Activated T-helper 2 cell treated with anti-CD3 and anti-CD28 coated beads, Interferon-gamma antibody, Interleukin-2, Interleukin-4, amounts not matched to agents 10 μg/mL and 5 μg/mL and 100 μg/mL, durations not matched to agents 14 hours and 24 hours and 36 hours (primary cell): ENCODE measurements at regions of chr3 and their contacts with region 1.

Region 1: DNA sequence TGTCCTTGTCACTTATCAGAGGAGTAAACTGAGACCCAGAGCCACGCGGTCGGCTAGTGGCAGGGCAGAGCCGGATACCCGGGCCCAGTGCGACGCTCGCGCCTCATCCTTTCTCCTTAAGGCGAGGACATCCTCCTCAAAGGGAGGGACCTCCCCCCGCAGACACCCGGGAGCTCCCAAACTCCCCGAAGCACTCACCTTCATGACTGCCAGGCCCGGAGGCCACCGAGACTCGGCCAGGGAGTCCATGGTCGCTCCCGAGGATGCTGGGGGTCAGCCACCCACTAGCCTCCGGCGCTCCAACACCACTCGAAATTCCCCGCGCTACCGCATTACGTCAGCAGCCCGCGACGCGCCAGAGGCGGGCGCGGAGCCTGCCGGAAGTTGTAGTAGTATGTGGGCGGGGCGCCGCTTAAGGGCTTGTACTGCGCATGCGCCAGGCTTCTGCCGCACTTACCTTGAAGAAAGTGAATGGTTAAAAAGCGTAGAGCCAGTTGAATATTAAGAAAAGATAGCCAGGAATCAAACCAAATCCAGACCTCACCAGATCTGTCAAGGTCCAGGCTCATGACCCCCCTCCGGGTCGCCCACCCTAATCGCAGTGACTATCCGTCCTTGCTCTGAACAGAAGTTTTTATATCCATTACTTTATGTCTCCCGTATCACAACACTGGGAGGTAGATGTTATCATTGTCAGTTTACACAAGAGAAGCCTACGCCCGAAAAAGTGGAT is at the start of gene RAD18:
- DNase-seq: peak; percentile 92
- H3K4me3 Mint-ChIP-seq: peak within 1 kb of the TSS; percentile 82
- H3K27ac Mint-ChIP-seq: peak within 1 kb of the TSS; percentile 98
- H3K4me1 Mint-ChIP-seq: peaks cover 37% of the 10 kb centered on the region
- H3K27me3 Mint-ChIP-seq: peaks cover 2% of the 10 kb centered on the region
- total RNA-seq, gene RAD18: 46.1 and 46.5 TPM in 2 replicates

Region 2: GRCh38 chr3:8638994-8639658 is 324.2 kb before region 1 on chr3:
- intact Hi-C with region 1: no loop called
- DNase-seq: no peak
- H3K4me3 Mint-ChIP-seq: no peak overlapping the region
- H3K27ac Mint-ChIP-seq: no peak overlapping the region
- H3K4me1 Mint-ChIP-seq: no peaks in the 10 kb centered on the region
- H3K27me3 Mint-ChIP-seq: peaks cover 13% of the 10 kb centered on the region

Region 3: DNA sequence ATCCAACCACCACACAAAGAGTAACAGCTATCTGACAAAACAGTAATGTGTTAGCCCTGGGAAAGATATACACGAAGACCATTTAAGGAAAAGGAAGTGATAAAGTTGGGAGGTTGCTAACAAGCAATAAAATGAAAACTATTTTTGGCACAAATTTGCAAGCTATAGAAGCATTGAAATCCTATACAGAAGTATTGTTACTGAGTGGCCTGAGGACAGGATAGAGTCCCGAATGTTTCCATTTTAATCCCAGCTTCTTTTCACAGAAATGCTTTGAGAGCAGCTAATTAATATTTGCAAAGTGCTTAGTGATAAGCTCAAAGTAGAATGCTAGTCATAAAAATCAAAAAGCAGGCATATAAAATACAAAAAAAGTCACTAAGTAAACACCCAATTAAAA is 51.5 kb before region 1 on chr3:
- intact Hi-C with region 1: no loop called
- DNase-seq: no peak
- H3K4me3 Mint-ChIP-seq: no peak overlapping the region
- H3K27ac Mint-ChIP-seq: no peak overlapping the region
- H3K4me1 Mint-ChIP-seq: no peaks in the 10 kb centered on the region
- H3K27me3 Mint-ChIP-seq: no peaks in the 10 kb centered on the region

Region 4: GRCh38 chr3:8982509-8982908 is 19.2 kb after region 1 on chr3:
- intact Hi-C with region 1: no loop called
- DNase-seq: no peak
- H3K4me3 Mint-ChIP-seq: no peak overlapping the region
- H3K27ac Mint-ChIP-seq: no peak overlapping the region
- H3K4me1 Mint-ChIP-seq: no peaks in the 10 kb centered on the region
- H3K27me3 Mint-ChIP-seq: peaks cover 12% of the 10 kb centered on the region

Region 5: DNA sequence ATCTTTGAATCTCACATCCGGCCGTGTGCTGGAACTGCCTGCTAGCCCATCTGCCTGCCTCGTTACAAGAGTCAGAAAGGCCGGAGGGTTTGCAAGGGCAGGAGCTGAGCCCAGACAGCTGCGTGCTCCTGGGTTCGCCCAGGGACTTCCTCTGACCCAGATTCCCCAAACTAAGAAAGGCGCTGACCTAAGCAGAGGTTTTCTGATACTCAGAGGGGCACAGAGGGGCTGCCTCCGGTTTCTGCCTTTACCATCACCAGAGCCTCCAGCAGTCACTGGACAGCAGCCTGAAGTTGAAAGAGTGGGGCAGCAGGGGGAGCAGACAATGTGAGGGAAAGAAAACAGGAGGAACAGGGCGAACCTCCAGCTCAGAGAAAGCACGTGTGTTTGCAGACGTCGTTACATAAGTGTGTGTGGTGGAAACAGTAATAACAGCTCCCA is 33.4 kb after region 1 on chr3:
- intact Hi-C with region 1: no loop called
- DNase-seq: no peak
- H3K4me3 Mint-ChIP-seq: no peak overlapping the region
- H3K27ac Mint-ChIP-seq: no peak overlapping the region
- H3K4me1 Mint-ChIP-seq: no peaks in the 10 kb centered on the region
- H3K27me3 Mint-ChIP-seq: peaks cover under 1% of the 10 kb centered on the region

Region 6: GRCh38 chr3:9362731-9363530 is 399.6 kb after region 1 on chr3 and contains the start of gene THUMPD3:
- intact Hi-C with region 1: loop called (anchors 2 kb)
- DNase-seq: peak; percentile 89
- H3K4me3 Mint-ChIP-seq: peak within 1 kb of the TSS; percentile 98
- H3K27ac Mint-ChIP-seq: peak within 1 kb of the TSS; percentile 99
- H3K4me1 Mint-ChIP-seq: peaks cover 19% of the 10 kb centered on the region
- H3K27me3 Mint-ChIP-seq: no peaks in the 10 kb centered on the region
- total RNA-seq, gene THUMPD3: 56.5 and 57.7 TPM in 2 replicates

Region 7: GRCh38 chr3:10322352-10322710 is 1359.0 kb after region 1 on chr3:
- intact Hi-C with region 1: loop called (anchors 5 kb)
- DNase-seq: no peak
- H3K4me3 Mint-ChIP-seq: no peak overlapping the region
- H3K27ac Mint-ChIP-seq: no peak overlapping the region
- H3K4me1 Mint-ChIP-seq: peaks cover 14% of the 10 kb centered on the region
- H3K27me3 Mint-ChIP-seq: peaks cover 15% of the 10 kb centered on the region